ENCODE measurements at regions of chr16 and their contacts with region 1.

Region 1: DNA sequence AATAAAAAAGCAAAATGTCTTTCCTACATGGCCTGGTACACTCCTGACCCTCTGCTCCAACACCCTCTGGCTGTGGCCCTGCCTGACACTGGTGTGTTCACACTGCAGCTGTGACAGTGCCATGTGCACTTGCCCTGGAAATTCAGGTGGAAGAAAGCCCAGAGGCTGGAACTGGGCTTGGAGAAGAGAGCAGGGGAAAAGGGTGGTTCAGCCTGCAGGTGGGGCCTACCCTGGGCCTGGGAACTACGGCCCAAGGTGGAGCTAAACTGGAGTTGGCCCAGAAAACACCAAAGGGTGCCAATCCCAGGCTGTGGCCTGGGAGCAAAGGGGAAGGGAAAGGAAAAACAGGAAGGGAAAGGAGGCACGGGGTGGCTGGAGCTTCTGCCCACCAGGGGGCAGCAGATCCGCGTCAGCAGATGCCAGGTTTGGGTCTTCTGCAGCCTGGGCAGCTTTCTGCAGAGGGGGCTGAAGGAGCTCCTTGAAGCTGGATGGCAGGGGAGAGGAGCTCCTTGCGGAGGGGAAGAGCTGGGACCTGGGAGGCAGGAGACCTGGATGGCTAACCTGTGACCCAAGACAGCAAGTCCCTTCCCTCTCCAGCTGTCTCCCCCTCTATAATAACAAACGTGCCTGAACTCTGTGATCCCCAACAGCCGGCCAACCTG is 15.4 kb upstream of the CTCF start:
- DNase-seq: peak; percentile 57 to 78 (median 70)
- ATAC-seq: peak; percentile 55
- H3K4me3 ChIP-seq: peak overlapping the region; percentile 56
- H3K4me3 Mint-ChIP-seq: peak overlapping the region; percentile 75 to 92 (median 86)
- H3K27ac ChIP-seq: peak overlapping the region; percentile 70
- H3K27ac Mint-ChIP-seq: peak overlapping the region; percentile 59 to 99 (median 97)
- H3K4me1 ChIP-seq: peaks cover 19 to 40% of the 10 kb centered on the region in 2 donors
- H3K4me1 Mint-ChIP-seq: peaks cover 25 to 56% (median 51%) of the 10 kb centered on the region in 7 donors
- H3K27me3 ChIP-seq: no peaks in the 10 kb centered on the region
- H3K27me3 Mint-ChIP-seq: no peaks in the 10 kb centered on the region

Region 2: GRCh38 chr16:67530013-67530939 is 16.6 kb before region 1 on chr16:
- CTCF ChIA-PET with region 1: interaction called, 4 read pairs
- POLR2A ChIA-PET with region 1: interaction called, 11 read pairs
- intact Hi-C with region 1: no loop called
- DNase-seq: peak in 1 of 9 donors; percentile 43
- ATAC-seq: peak; percentile 61
- H3K4me3 ChIP-seq: peak overlapping the region; percentile 53
- H3K4me3 Mint-ChIP-seq: peak overlapping the region; percentile 77 to 90 (median 82)
- H3K27ac ChIP-seq: no peak overlapping the region
- H3K27ac Mint-ChIP-seq: peak overlapping the region in 5 of 9 donors; percentile 19 to 78 (median 38)
- H3K4me1 ChIP-seq: peaks cover 11 to 22% of the 10 kb centered on the region in 2 donors
- H3K4me1 Mint-ChIP-seq: peaks cover 20 to 32% (median 26%) of the 10 kb centered on the region in 7 donors
- H3K27me3 ChIP-seq: peaks cover 4 to 9% of the 10 kb centered on the region in 2 donors
- H3K27me3 Mint-ChIP-seq: peaks cover 0 to 66% (median 11%) of the 10 kb centered on the region in 5 donors

Region 3: GRCh38 chr16:67613808-67614207 is 66.9 kb after region 1 on chr16:
- CTCF ChIA-PET with region 1: interaction called, 14 read pairs
- POLR2A ChIA-PET with region 1: interaction called, 3 read pairs
- intact Hi-C with region 1: no loop called
- DNase-seq: no peak
- ATAC-seq: no peak
- H3K4me3 ChIP-seq: no peak overlapping the region
- H3K4me3 Mint-ChIP-seq: no peak overlapping the region
- H3K27ac ChIP-seq: no peak overlapping the region
- H3K27ac Mint-ChIP-seq: no peak overlapping the region
- H3K4me1 ChIP-seq: no peaks in the 10 kb centered on the region
- H3K4me1 Mint-ChIP-seq: peaks cover 0 to 4% (median 0%) of the 10 kb centered on the region in 7 donors
- H3K27me3 ChIP-seq: no peaks in the 10 kb centered on the region
- H3K27me3 Mint-ChIP-seq: no peaks in the 10 kb centered on the region

Region 4: DNA sequence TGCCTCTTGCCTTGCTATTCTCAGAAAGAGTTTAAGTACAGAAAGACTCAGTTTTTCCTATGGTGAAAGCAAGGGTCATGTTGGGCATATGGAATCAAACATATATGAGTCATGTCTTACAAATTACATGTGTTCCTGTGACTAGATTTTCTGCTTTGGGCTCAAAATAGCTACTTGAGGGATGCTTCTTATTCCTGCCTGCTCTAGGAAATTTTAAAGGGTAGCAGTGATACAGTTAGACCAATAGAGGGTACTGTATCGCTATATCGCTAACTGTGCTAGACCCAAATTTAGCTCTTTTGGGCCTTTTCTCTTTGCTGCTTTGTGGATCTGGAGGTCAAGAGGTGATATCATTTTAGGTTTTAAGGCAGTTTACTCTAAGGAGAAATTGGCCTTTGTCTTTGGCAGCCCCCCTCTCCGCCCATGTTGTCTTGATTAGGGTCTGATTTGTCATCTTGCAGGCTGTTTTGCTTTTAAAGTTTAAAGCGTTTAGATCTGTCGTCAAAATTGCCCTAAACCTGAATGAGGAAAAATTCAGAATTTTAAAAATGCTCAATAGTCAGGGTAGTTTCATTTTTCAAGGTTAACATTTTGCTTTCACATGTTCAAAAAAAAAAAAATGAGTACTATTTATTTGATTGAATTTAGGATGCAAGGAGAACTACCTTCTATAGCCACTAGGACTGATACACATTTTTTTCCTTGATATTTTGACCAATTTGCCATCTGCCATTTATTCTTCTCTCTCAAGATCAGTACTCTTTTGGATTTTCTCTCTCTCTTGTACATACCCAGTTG is 547.1 kb after region 1 on chr16:
- CTCF ChIA-PET with region 1: no interaction called
- POLR2A ChIA-PET with region 1: no interaction called
- intact Hi-C with region 1: no loop called
- DNase-seq: peak in 7 of 9 donors; percentile 30 to 57 (median 40)
- ATAC-seq: peak; percentile 89
- H3K4me3 ChIP-seq: no peak overlapping the region
- H3K4me3 Mint-ChIP-seq: peak overlapping the region; percentile 28 to 72 (median 58)
- H3K27ac ChIP-seq: peak overlapping the region; percentile 17
- H3K27ac Mint-ChIP-seq: peak overlapping the region; percentile 56 to 92 (median 83)
- H3K4me1 ChIP-seq: peaks cover 74 to 81% of the 10 kb centered on the region in 2 donors
- H3K4me1 Mint-ChIP-seq: peaks cover 64 to 97% (median 84%) of the 10 kb centered on the region in 7 donors
- H3K27me3 ChIP-seq: no peaks in the 10 kb centered on the region
- H3K27me3 Mint-ChIP-seq: no peaks in the 10 kb centered on the region

Measured in naive thymus-derived CD4-positive, alpha-beta T cell (primary cell).